Vagina (tissue), 2 donors: ENCODE measurements at regions of chr10 and their contacts with region 1.

Region 1: GRCh38 chr10:23525406-23525805 is 86.5 kb downstream of the OTUD1 start:
- DNase-seq: no peak
- H3K4me3 ChIP-seq: no peak overlapping the region
- H3K27ac ChIP-seq: no peak overlapping the region
- H3K4me1 ChIP-seq: no peaks in the 10 kb centered on the region
- H3K27me3 ChIP-seq: no peaks in the 10 kb centered on the region
- CTCF ChIP-seq: no peak
- POLR2A ChIP-seq: no peak

Region 2: DNA sequence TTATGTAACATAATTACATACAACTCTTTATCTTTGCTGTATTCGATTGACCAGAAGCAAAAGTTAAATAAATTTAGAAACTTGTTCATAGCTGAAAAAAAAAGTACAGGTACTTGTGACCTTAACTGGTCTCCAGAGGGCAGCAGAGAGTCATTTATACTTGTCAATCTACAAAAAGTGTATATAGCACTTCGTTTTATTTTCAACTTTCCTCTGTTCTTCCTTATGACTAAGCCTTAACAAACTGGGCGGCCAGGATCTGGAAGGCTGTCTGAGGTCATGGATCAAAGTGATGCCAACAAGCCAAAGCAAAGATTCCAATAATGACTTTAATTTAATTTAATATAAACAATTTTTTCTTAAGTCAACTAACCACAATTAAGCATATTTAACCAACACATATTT is 210.6 kb before region 1 on chr10:
- intact Hi-C with region 1: loop called (anchors 5 kb)
- DNase-seq: no peak
- H3K4me3 ChIP-seq: no peak overlapping the region
- H3K27ac ChIP-seq: no peak overlapping the region
- H3K4me1 ChIP-seq: peaks cover 8% of the 10 kb centered on the region
- H3K27me3 ChIP-seq: no peaks in the 10 kb centered on the region
- CTCF ChIP-seq: peak; percentile 42 to 62 (median 60)
- POLR2A ChIP-seq: no peak